ENCODE measurements at regions of chrX and their contacts with region 1.

Region 1: GRCh38 chrX:10119399-10119990 is 37.3 kb upstream of the CLCN4 start:
- DNase-seq: peak; percentile 73
- ATAC-seq: peak; percentile 40
- H3K4me3 ChIP-seq: no peak overlapping the region
- H3K27ac ChIP-seq: no peak overlapping the region
- H3K4me1 ChIP-seq: no peaks in the 10 kb centered on the region
- H3K27me3 ChIP-seq: no peaks in the 10 kb centered on the region
- CTCF ChIP-seq: peak; percentile 77 to 100 (median 100)
- POLR2A ChIP-seq: no peak
- RAD21 ChIP-seq: peak; percentile 99

Region 2: GRCh38 chrX:8815464-8816065 is 1303.9 kb before region 1 on chrX:
- CTCF ChIA-PET with region 1: no interaction called
- POLR2A ChIA-PET with region 1: no interaction called
- RAD21 ChIA-PET with region 1: no interaction called
- intact Hi-C with region 1: loop called (anchors 2 kb)
- DNase-seq: peak; percentile 2
- ATAC-seq: peak; percentile 30; the same call in 1 of the 2 replicates
- H3K4me3 ChIP-seq: no peak overlapping the region
- H3K27ac ChIP-seq: no peak overlapping the region
- H3K4me1 ChIP-seq: no peaks in the 10 kb centered on the region
- H3K27me3 ChIP-seq: no peaks in the 10 kb centered on the region
- CTCF ChIP-seq: peak; percentile 19 to 46 (median 45); a peak in 5 of 6 replicates
- POLR2A ChIP-seq: no peak
- RAD21 ChIP-seq: peak; percentile 39

Region 3: DNA sequence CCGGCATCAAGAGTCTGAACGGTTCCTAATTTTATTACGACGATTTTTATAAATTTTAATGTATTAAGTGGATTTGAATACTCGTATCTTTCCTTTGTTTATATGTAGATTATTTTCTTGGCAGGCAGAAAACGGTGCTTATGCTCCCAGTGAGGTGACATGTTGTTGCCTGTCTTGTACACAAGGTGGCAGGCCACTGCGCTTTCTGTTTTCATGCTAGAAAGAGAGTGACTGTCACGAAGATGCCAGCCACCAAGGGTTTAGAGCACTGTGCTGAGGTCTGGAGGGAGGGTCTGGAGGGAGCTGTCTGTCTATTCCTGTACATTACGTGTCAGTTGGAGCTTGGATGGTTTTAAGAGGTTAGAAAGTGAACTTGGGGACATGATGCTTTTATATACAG is 245.5 kb before region 1 on chrX:
- CTCF ChIA-PET with region 1: no interaction called
- POLR2A ChIA-PET with region 1: no interaction called
- RAD21 ChIA-PET with region 1: no interaction called
- intact Hi-C with region 1: loop called (anchors 5 kb)
- DNase-seq: peak; percentile 10
- ATAC-seq: peak; percentile 63; the same call in 1 of the 2 replicates
- H3K4me3 ChIP-seq: no peak overlapping the region
- H3K27ac ChIP-seq: no peak overlapping the region
- H3K4me1 ChIP-seq: no peaks in the 10 kb centered on the region
- H3K27me3 ChIP-seq: no peaks in the 10 kb centered on the region
- CTCF ChIP-seq: peak; percentile 31 to 50 (median 33); a peak in 5 of 6 replicates
- POLR2A ChIP-seq: no peak
- RAD21 ChIP-seq: peak; percentile 36

Region 4: GRCh38 chrX:9988762-9989161 is 130.7 kb before region 1 on chrX:
- CTCF ChIA-PET with region 1: no interaction called
- POLR2A ChIA-PET with region 1: no interaction called
- RAD21 ChIA-PET with region 1: no interaction called
- intact Hi-C with region 1: loop called (anchors 1 kb)
- DNase-seq: no peak
- ATAC-seq: no peak
- H3K4me3 ChIP-seq: no peak overlapping the region
- H3K27ac ChIP-seq: no peak overlapping the region
- H3K4me1 ChIP-seq: no peaks in the 10 kb centered on the region
- H3K27me3 ChIP-seq: no peaks in the 10 kb centered on the region
- CTCF ChIP-seq: peak; percentile 12 to 79 (median 44); a peak in 4 of 6 replicates
- POLR2A ChIP-seq: no peak
- RAD21 ChIP-seq: peak; percentile 60

Region 5: DNA sequence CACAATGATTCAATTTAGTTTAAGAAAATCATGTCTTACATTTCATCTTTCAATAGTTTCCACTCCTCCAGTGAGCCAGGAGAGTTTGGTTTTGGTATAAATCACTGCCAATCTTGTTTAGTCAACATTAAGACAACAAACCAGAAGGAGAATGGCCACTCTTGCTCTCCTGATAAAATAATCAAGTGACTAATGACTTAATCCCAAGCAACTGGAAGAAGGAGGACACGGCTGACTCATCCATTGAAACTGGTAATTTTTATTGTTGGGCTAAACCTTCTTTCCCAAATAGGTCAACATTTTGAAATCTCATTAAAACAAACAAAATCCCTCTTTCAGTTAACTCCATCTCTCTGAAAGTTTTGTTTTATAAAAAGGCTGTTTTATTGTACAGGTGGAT is 267.5 kb after region 1 on chrX:
- CTCF ChIA-PET with region 1: no interaction called
- POLR2A ChIA-PET with region 1: no interaction called
- RAD21 ChIA-PET with region 1: no interaction called
- intact Hi-C with region 1: no loop called
- DNase-seq: no peak
- ATAC-seq: no peak
- H3K4me3 ChIP-seq: no peak overlapping the region
- H3K27ac ChIP-seq: no peak overlapping the region
- H3K4me1 ChIP-seq: peaks cover 0 to 8% of the 10 kb centered on the region in 2 experiments; a peak in 1 of 4 replicates
- H3K27me3 ChIP-seq: no peaks in the 10 kb centered on the region
- CTCF ChIP-seq: no peak
- POLR2A ChIP-seq: no peak
- RAD21 ChIP-seq: no peak